ENCODE measurements at regions of chr4 and their contacts with region 1.

Region 1: GRCh38 chr4:152535903-152536544 is at the start of gene FBXW7:
- DNase-seq: peak; percentile 99
- ATAC-seq: peak; percentile 85
- H3K4me3 Mint-ChIP-seq: peak within 1 kb of the TSS; percentile 99
- H3K27ac Mint-ChIP-seq: peak within 1 kb of the TSS; percentile 98
- H3K4me1 Mint-ChIP-seq: peaks cover 72% of the 10 kb centered on the region
- H3K27me3 Mint-ChIP-seq: no peaks in the 10 kb centered on the region
- CTCF ChIP-seq: no peak
- total RNA-seq, gene FBXW7: 96.5 and 102 TPM in 2 replicates

Region 2: GRCh38 chr4:152454398-152455011 is 81.5 kb before region 1 on chr4:
- CTCF ChIA-PET with region 1: interaction called, 3 read pairs
- POLR2A ChIA-PET with region 1: interaction called, 9 read pairs
- intact Hi-C with region 1: loop called (anchors 1 kb)
- DNase-seq: no peak
- ATAC-seq: no peak
- H3K4me3 Mint-ChIP-seq: no peak overlapping the region
- H3K27ac Mint-ChIP-seq: peak overlapping the region; percentile 41
- H3K4me1 Mint-ChIP-seq: peaks cover 50% of the 10 kb centered on the region
- H3K27me3 Mint-ChIP-seq: no peaks in the 10 kb centered on the region
- CTCF ChIP-seq: no peak

Region 3: GRCh38 chr4:152515678-152516077 is 20.3 kb before region 1 on chr4:
- CTCF ChIA-PET with region 1: no interaction called
- POLR2A ChIA-PET with region 1: interaction called, 6 read pairs
- intact Hi-C with region 1: loop called (anchors 2 kb)
- DNase-seq: no peak
- ATAC-seq: no peak
- H3K4me3 Mint-ChIP-seq: no peak overlapping the region
- H3K27ac Mint-ChIP-seq: no peak overlapping the region
- H3K4me1 Mint-ChIP-seq: peaks cover 40% of the 10 kb centered on the region
- H3K27me3 Mint-ChIP-seq: no peaks in the 10 kb centered on the region
- CTCF ChIP-seq: no peak

Region 4: GRCh38 chr4:152585023-152585441 is 49.0 kb after region 1 on chr4:
- CTCF ChIA-PET with region 1: no interaction called
- POLR2A ChIA-PET with region 1: interaction called, 8 read pairs
- intact Hi-C with region 1: loop called (anchors 2 kb)
- DNase-seq: no peak
- ATAC-seq: peak; percentile 57
- H3K4me3 Mint-ChIP-seq: peak overlapping the region; percentile 63
- H3K27ac Mint-ChIP-seq: peak overlapping the region; percentile 87
- H3K4me1 Mint-ChIP-seq: peaks cover 14% of the 10 kb centered on the region
- H3K27me3 Mint-ChIP-seq: no peaks in the 10 kb centered on the region
- CTCF ChIP-seq: no peak

Region 5: DNA sequence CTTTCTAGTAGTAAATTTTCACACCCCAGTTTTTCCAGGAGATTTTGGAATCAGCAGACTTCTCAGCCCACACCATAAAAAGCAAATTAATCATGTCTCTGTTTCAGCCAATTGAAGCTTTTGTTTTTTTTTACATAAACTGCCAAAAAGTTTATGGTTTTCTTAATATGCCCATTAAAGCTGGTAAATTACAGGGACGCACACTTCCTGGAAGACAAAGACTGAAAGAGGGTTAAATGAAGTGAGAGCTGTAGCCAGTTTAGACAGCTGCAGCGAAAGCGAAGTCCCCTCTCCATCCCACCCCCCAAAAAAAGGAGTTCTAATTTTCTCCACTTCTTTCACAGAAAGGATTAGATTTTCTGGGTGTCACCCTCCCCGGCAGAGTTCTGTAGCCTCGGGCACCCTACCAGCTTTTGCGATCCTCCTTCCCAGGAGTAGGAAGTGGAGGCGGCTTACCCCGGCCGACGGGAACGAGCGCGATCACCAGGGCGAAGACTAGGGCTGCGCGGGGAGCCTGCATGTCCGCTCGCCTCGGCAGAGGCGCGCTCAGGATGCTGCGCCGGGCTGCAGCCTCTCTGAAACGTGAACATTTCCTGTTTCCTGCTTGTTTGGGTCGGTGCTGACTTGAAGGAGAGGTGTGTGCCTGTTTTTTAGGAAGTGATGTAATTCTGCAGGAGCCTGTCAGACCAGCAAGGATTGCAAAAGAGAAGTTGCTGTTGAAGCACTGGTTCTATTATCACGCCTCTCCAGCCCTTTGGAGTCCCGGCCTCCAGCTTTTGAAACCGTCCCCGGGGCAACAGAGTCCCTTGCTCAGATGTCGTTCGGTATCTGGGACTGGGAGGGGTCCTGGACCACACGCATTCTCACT is 143.6 kb after region 1 on chr4 and contains the start of gene TMEM154:
- CTCF ChIA-PET with region 1: no interaction called
- POLR2A ChIA-PET with region 1: interaction called, 27 read pairs
- intact Hi-C with region 1: loop called (anchors 1 kb)
- DNase-seq: peak; percentile 66
- ATAC-seq: peak; percentile 83
- H3K4me3 Mint-ChIP-seq: peak within 1 kb of the TSS; percentile 95
- H3K27ac Mint-ChIP-seq: peak within 1 kb of the TSS; percentile 96
- H3K4me1 Mint-ChIP-seq: peaks cover 84% of the 10 kb centered on the region
- H3K27me3 Mint-ChIP-seq: no peaks in the 10 kb centered on the region
- CTCF ChIP-seq: no peak
- total RNA-seq, gene TMEM154: 47.5 and 59.9 TPM in 2 replicates

Region 6: DNA sequence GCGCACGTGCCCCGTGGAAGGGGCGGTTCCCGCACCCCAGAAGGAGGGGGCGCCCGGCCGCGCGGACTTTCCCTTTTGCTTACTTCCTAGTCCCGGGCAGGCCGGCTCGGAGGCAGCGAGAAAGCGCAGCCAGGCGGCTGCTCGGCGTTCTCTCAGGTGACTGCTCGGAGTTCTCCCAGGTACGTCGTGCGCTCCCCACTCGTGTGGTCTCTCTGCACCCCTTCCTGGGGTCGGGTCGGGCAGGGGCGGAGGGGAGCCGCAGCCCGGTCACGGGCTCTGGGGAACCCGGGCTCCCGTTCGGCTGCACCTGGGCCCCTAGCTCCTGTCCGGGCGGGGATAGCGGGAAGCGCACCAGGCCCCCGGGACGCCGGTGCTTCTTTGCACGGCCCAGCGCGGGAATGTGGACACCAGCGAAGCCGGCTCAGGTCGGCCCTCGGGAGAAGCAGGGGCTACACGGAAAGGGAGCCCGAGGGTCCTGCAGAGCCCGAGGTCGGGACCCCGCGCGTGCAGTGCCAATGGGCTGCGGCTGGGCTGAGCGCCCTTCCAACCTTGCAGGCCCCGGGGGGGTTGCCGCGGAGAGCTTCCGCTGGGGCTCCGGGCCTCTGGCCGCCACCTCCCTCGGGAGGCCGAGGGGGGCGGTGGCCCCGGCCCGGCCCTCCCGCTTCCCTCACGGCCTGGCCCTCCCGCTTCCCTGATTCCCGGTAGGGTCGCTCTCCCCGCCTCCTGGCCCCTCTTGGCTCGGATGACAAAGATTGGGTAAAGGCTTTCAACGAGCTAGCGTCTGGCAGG is 1148.4 kb after region 1 on chr4 and contains the start of gene TLR2:
- CTCF ChIA-PET with region 1: no interaction called
- POLR2A ChIA-PET with region 1: no interaction called
- intact Hi-C with region 1: loop called (anchors 10 kb)
- DNase-seq: peak; percentile 66
- ATAC-seq: peak; percentile 90
- H3K4me3 Mint-ChIP-seq: peak within 1 kb of the TSS; percentile 82
- H3K27ac Mint-ChIP-seq: peak within 1 kb of the TSS; percentile 9
- H3K4me1 Mint-ChIP-seq: peaks cover 12% of the 10 kb centered on the region
- H3K27me3 Mint-ChIP-seq: peaks cover 5% of the 10 kb centered on the region
- CTCF ChIP-seq: no peak
- total RNA-seq, gene TLR2: 3.6 and 4.3 TPM in 2 replicates